Caco-2 (cell line): ENCODE measurements at regions of chr18 and their contacts with region 1.

Region 1: DNA sequence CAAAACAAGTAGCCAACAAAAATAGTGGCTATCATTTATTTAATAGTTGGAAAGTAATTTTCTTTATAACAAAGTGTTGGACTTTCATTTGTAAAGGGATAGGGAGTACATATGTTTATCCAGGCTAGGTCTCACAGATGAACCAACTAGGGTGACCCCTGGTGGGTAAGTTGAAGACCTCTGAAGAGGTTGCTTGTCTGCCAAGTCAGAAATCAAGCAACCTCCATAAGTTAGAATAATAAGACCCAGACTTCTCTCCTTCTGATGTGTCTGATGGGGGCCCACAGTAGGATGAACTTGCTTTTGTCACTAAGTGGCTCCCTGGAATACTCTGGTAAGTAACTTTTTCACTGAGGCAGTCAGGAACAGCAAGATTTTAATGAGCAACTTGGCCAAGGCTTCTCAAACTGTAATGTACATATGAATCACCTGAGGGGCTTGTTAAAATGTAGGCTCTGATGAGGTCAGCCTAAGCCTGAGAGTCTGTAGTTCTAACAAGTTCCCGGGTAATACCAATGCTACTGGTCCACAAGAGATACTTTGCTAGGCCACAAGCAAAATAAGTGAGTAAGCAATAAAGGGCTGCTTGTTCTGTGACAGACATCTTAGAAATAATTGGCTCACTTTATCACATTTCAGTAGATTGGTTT is 319.6 kb downstream of the PIK3C3 start:
- DNase-seq: peak; percentile 31 to 32
- H3K4me3 ChIP-seq: no peak overlapping the region
- H3K4me3 Mint-ChIP-seq: no peak overlapping the region
- H3K27ac Mint-ChIP-seq: no peak overlapping the region
- H3K4me1 ChIP-seq: no peaks in the 10 kb centered on the region
- H3K4me1 Mint-ChIP-seq: peaks cover 7% of the 10 kb centered on the region
- H3K27me3 ChIP-seq: no peaks in the 10 kb centered on the region
- H3K27me3 Mint-ChIP-seq: no peaks in the 10 kb centered on the region
- CTCF ChIP-seq: peak in 1 of 2 experiments; percentile 22

Region 2: GRCh38 chr18:42114310-42114943 is 160.2 kb before region 1 on chr18:
- CTCF ChIA-PET with region 1: interaction called, 6 read pairs
- POLR2A ChIA-PET with region 1: no interaction called
- intact Hi-C with region 1: loop called (anchors 1 kb)
- DNase-seq: peak; percentile 36 to 66
- H3K4me3 ChIP-seq: no peak overlapping the region
- H3K4me3 Mint-ChIP-seq: no peak overlapping the region
- H3K27ac Mint-ChIP-seq: no peak overlapping the region
- H3K4me1 ChIP-seq: no peaks in the 10 kb centered on the region
- H3K4me1 Mint-ChIP-seq: peaks cover 4% of the 10 kb centered on the region
- H3K27me3 ChIP-seq: no peaks in the 10 kb centered on the region
- H3K27me3 Mint-ChIP-seq: no peaks in the 10 kb centered on the region
- CTCF ChIP-seq: peak; percentile 53 to 63

Region 3: GRCh38 chr18:42211201-42211600 is 63.4 kb before region 1 on chr18:
- CTCF ChIA-PET with region 1: no interaction called
- POLR2A ChIA-PET with region 1: no interaction called
- intact Hi-C with region 1: loop called (anchors 2 kb)
- DNase-seq: no peak
- H3K4me3 ChIP-seq: no peak overlapping the region
- H3K4me3 Mint-ChIP-seq: no peak overlapping the region
- H3K27ac Mint-ChIP-seq: no peak overlapping the region
- H3K4me1 ChIP-seq: no peaks in the 10 kb centered on the region
- H3K4me1 Mint-ChIP-seq: no peaks in the 10 kb centered on the region
- H3K27me3 ChIP-seq: no peaks in the 10 kb centered on the region
- H3K27me3 Mint-ChIP-seq: no peaks in the 10 kb centered on the region
- CTCF ChIP-seq: no peak

Region 4: DNA sequence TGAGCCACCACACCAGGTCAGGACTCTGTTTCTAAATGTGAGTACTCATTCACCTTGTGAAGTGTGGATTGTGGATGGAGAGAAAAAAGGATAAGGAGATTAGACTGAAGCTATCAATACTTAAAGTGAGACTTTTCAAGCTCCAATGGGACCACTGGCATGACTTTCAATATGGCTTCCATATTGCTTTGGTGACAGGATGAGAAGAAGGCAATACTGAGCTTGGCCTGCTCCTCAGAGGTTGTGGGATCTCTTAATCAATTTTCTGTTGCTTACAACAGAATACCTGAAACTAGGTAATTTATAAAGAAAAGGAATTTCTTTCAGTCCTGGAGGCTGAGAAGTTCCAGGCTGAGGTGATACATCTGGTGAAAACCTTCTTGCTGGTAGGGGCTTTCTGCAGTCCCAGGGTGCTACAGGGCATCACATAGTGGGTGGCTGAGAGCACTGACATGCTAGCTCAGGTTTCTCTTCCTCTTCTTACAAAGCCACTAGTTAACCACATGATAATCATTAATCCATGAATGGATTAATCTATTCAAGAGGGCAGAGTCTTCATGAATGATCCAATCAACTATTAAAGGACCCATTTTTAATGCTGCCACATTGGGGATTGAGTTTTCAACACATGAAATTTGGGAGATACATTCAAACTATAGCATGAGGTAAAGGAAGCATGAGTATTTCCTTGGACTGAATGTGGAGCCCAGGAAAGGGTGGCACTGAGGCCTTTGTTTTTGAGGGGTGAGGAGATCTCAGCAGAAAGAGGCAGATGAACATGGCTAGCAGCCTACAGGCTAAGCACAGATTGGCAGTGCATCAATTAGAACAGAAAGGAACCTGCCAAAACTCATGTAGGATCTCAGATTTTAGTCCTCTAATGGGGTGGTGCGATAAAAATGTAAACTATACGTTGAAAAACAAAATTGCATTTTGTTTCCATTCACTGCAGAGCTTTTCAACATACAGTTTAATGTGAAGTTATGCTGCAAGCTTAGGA is 45.1 kb before region 1 on chr18:
- CTCF ChIA-PET with region 1: no interaction called
- POLR2A ChIA-PET with region 1: no interaction called
- intact Hi-C with region 1: loop called (anchors 5 kb)
- DNase-seq: no peak
- H3K4me3 ChIP-seq: no peak overlapping the region
- H3K4me3 Mint-ChIP-seq: no peak overlapping the region
- H3K27ac Mint-ChIP-seq: no peak overlapping the region
- H3K4me1 ChIP-seq: peaks cover 12% of the 10 kb centered on the region
- H3K4me1 Mint-ChIP-seq: peaks cover 9% of the 10 kb centered on the region
- H3K27me3 ChIP-seq: no peaks in the 10 kb centered on the region
- H3K27me3 Mint-ChIP-seq: no peaks in the 10 kb centered on the region
- CTCF ChIP-seq: no peak

Region 5: GRCh38 chr18:42242758-42243157 is 31.9 kb before region 1 on chr18:
- CTCF ChIA-PET with region 1: no interaction called
- POLR2A ChIA-PET with region 1: no interaction called
- intact Hi-C with region 1: no loop called
- DNase-seq: peak; percentile 43 to 50
- H3K4me3 ChIP-seq: no peak overlapping the region
- H3K4me3 Mint-ChIP-seq: no peak overlapping the region
- H3K27ac Mint-ChIP-seq: no peak overlapping the region
- H3K4me1 ChIP-seq: no peaks in the 10 kb centered on the region
- H3K4me1 Mint-ChIP-seq: no peaks in the 10 kb centered on the region
- H3K27me3 ChIP-seq: no peaks in the 10 kb centered on the region
- H3K27me3 Mint-ChIP-seq: no peaks in the 10 kb centered on the region
- CTCF ChIP-seq: no peak